ENCODE measurements at regions of chr14 and their contacts with region 1.

Region 1: DNA sequence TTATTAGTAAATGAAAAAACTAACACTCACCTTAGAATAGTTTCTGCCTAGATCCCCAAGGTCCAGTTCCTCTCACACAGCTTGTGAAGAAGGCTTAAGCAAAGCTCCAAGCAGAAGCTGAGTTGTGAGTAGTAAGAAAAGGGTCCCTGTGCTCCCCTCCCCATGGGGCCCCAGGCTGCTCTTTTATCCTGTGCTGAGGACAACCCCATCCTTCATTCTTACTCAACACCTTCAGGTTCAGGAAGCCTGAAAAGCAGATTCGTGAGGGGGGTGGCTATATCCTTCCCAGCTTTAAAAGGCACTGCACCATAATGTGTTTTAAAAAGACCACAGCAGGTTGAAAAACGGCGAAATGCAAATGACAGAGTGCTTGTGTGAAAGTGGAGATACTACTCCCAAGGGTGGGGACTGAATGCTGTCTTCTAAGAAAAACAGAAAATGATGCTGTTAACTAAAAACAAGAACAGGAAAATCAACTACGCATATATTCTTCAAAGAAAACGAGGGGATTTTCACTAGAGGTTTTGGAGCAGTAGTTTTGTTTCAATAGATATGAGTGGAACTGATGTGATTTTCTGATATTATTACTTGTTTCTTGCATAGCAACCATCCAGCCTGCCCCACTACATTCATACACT is 182.7 kb downstream of the KTN1 start:
- DNase-seq: peak; percentile 81
- H3K4me3 Mint-ChIP-seq: peak overlapping the region; percentile 62
- H3K27ac Mint-ChIP-seq: peak overlapping the region; percentile 75
- H3K4me1 Mint-ChIP-seq: peaks cover 32% of the 10 kb centered on the region
- H3K27me3 Mint-ChIP-seq: peaks cover 4% of the 10 kb centered on the region

Region 2: DNA sequence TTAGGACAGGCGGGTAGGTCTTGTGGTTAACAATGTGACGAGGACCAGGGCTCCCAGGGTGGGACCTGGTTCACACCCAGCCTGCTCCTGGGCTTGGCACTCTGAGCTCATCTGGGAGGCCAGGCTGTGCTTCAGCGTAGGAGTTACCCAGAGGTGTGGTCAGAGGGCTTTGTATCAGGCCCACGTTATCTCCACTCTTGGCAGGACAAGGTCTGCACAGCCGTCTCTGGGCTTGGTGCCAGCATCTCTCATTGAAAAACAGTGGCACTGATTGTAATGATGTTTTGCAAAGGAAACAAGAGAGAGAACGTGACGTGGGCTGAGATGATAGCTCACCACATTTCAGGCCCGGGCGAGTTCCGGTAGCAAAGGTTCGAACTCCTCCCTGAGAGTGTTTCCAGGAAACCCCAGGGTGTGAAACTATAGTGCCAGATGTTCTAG is 44.4 kb after region 1 on chr14:
- intact Hi-C with region 1: loop called (anchors 2 kb)
- DNase-seq: peak; percentile 93
- H3K4me3 Mint-ChIP-seq: peak overlapping the region; percentile 53
- H3K27ac Mint-ChIP-seq: peak overlapping the region; percentile 84
- H3K4me1 Mint-ChIP-seq: peaks cover 53% of the 10 kb centered on the region
- H3K27me3 Mint-ChIP-seq: no peaks in the 10 kb centered on the region

Region 3: GRCh38 chr14:55926012-55926411 is 163.3 kb after region 1 on chr14:
- intact Hi-C with region 1: no loop called
- DNase-seq: no peak
- H3K4me3 Mint-ChIP-seq: no peak overlapping the region
- H3K27ac Mint-ChIP-seq: no peak overlapping the region
- H3K4me1 Mint-ChIP-seq: no peaks in the 10 kb centered on the region
- H3K27me3 Mint-ChIP-seq: peaks cover 15% of the 10 kb centered on the region

Measured in activated CD4-positive, alpha-beta T cell treated with anti-CD3 and anti-CD28 coated beads, Interleukin-2, amount 10 ng/mL, durations not matched to agents 24 days and 14 days (primary cell).